ENCODE measurements at regions of chr16 and their contacts with region 1.

Region 1: DNA sequence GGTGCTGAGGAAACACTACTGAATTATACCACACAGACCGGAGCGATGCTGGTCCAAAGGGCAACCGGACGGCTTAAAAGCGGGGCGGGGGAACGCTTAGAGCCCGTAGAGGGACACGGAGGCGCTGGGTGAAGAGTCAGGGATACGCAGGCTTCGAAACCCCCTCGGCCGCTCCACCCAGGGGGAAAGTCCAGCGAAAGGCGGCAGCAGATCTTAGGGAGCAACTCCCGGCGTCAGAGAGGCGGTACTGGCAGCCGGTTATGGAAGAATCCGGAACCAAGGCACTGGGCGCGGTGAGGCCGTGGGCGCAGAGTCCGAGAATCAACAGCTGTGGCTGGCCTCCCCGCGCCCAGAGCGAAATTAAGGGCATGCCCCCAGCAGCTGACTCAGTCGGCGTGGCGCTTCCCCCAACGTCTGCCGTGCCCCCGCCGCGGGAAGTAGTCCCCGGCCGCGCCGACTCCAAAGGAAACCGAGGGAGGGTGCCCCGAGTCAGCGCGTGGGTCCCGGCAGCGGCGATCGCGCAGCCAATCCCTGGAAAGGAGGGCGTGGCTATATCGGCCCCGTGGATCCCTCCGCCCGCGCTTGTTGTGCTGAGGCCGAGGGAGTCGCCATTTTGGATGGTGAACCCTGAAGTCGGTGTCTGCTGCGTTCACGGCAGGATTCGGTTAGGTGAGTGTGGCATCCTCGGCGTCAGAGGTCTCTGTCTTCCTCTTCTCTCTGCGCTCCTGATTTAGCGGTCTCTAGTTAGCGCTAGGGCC is at the start of gene IST1:
- DNase-seq: peak; percentile 98
- H3K4me3 Mint-ChIP-seq: peak within 1 kb of the TSS; percentile 90
- H3K27ac Mint-ChIP-seq: peak within 1 kb of the TSS; percentile 91
- H3K4me1 Mint-ChIP-seq: peaks cover 12% of the 10 kb centered on the region
- H3K27me3 Mint-ChIP-seq: no peaks in the 10 kb centered on the region
- total RNA-seq, gene IST1: 156 and 169 TPM in 2 replicates

Region 2: DNA sequence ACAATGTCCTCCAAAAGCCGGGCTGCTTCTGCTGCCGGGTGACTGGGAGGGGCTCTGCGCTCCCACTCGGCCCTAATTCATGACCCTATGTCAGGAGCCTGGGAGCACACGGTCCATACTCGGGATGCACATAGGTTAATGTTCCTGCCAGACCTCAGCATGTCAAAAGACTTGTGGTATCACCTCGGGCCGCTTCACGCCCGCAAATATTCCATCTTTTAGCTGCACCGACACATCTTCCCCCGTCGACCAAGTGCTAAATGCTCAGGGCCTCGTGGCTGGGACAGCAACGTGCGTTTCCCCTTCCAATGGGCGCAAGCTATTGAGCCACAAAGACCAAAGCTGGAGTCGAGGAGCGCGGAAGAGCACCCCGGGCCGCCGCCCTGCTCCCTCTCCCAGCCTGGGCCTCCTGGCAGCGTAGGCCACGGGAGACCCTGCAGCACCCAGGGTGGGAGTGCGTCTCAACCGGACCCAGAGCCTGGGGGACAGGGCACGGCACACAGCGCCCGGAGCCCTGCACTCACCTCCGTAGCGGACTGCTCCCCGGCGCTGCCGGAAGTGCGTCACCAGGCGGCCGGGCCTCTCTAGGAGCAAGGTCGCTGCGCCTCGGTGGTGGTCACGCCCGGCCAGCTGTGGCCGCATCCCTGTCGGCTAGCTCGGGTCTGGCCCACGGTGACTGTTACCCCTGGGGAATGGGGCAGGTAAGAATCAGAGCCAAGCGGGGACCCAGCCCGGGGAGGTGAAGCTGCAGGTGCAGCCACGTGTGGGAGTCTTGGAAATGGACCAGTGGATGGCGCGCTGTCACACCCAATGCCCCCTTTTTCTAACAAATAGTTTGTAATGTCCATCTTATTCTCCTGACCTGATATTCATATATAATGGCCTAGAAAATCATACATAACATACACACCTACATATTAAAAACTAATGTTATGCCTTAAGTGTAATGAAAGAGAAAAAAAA is 433.1 kb before region 1 on chr16 and contains the start of gene ZNF23:
- intact Hi-C with region 1: no loop called
- DNase-seq: peak; percentile 71
- H3K4me3 Mint-ChIP-seq: peak within 1 kb of the TSS; percentile 86
- H3K27ac Mint-ChIP-seq: peak within 1 kb of the TSS; percentile 86
- H3K4me1 Mint-ChIP-seq: peaks cover 13% of the 10 kb centered on the region
- H3K27me3 Mint-ChIP-seq: peaks cover 1% of the 10 kb centered on the region
- total RNA-seq, gene ZNF23: 4.9 and 6.4 TPM in 2 replicates

Region 3: DNA sequence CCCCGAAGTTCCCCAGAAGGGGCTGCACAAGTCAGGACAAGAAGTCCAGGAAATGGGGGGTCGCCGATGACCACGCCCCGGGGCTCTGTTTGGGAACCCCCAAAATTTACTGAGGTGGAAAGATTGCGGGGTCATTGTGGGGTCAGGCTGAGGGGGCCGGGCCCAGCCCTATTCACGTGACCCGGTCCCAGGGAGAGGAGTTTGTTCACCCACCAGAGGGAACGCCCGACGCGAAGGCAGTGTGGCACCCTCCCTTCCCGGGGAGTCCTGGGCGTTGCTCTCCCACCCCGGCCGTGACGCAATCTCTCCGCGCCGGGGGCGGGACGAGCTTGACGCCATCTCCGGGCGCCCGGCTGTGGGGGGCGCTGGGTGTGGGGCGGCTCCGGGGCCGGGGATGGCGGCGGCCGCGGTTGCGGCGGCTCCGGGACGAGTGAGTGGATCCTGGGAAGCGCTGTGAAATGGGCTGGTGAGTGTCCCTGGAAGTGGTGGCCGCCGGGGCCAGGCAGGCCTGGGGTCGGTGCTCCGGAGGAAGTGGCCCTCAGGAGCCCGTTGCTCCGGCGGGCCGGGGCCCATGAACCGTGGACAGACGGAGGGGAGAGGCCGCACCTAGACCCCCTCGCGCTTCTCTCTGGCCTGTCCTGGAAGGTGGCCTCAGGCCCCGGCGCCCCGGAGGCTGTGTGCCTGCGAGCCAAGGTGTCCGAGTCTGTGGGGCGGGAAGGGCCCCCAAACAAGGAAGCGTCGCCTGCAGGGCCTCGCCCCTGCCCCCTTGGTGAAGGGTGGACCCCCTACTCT is 49.3 kb before region 1 on chr16 and contains the start of gene ATXN1L:
- intact Hi-C with region 1: loop called (anchors 1 kb)
- DNase-seq: peak; percentile 94
- H3K4me3 Mint-ChIP-seq: peak within 1 kb of the TSS; percentile 93
- H3K27ac Mint-ChIP-seq: peak within 1 kb of the TSS; percentile 94
- H3K4me1 Mint-ChIP-seq: peaks cover 52% of the 10 kb centered on the region
- H3K27me3 Mint-ChIP-seq: no peaks in the 10 kb centered on the region
- total RNA-seq, gene ATXN1L: 20.1 and 20.6 TPM in 2 replicates

Region 4: DNA sequence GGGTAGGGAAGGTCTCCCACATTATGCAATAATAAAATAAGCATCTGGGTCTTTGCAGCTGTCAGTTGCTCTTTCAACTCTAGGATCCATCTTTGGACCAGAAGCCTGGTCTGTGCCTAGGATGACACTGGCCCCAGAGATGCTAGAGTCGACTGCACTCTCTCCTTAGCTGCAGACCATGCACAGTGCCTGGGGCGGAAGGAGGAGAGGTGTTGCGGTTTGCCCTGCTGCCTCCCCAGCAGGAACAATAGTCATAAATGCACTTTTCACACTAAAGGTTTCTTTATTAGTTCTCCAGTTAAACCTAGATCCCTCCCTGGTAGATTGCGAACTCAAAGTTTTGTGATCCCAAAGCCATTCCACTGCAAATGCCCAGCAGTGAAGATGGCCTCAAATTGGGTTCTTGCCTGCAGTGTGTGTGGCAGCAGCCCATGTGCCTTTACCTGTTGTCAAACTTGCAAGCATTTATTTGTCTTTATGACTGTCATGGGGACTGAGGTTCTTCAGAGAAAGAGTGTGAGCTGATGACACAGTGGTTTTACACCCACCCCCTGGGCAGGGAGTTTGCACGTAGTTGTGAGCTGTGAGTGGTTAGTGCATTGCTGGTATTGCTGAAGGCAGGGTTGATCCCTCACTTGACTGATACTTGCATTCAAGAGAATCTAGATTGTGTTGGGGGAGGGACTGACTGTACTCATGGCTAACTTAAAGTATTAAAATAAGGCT is 39.0 kb before region 1 on chr16:
- intact Hi-C with region 1: no loop called
- DNase-seq: no peak
- H3K4me3 Mint-ChIP-seq: no peak overlapping the region
- H3K27ac Mint-ChIP-seq: peak overlapping the region; percentile 88
- H3K4me1 Mint-ChIP-seq: peaks cover 53% of the 10 kb centered on the region
- H3K27me3 Mint-ChIP-seq: no peaks in the 10 kb centered on the region

Region 5: GRCh38 chr16:71883849-71884638 is 11.1 kb before region 1 on chr16 and contains the start of gene ZNF821:
- intact Hi-C with region 1: loop called (anchors 1 kb)
- DNase-seq: peak; percentile 61
- H3K4me3 Mint-ChIP-seq: peak within 1 kb of the TSS; percentile 96
- H3K27ac Mint-ChIP-seq: peak within 1 kb of the TSS; percentile 94
- H3K4me1 Mint-ChIP-seq: peaks cover 54% of the 10 kb centered on the region
- H3K27me3 Mint-ChIP-seq: peaks cover 16% of the 10 kb centered on the region
- total RNA-seq, gene ZNF821: 6.4 and 7.4 TPM in 2 replicates

Region 6: DNA sequence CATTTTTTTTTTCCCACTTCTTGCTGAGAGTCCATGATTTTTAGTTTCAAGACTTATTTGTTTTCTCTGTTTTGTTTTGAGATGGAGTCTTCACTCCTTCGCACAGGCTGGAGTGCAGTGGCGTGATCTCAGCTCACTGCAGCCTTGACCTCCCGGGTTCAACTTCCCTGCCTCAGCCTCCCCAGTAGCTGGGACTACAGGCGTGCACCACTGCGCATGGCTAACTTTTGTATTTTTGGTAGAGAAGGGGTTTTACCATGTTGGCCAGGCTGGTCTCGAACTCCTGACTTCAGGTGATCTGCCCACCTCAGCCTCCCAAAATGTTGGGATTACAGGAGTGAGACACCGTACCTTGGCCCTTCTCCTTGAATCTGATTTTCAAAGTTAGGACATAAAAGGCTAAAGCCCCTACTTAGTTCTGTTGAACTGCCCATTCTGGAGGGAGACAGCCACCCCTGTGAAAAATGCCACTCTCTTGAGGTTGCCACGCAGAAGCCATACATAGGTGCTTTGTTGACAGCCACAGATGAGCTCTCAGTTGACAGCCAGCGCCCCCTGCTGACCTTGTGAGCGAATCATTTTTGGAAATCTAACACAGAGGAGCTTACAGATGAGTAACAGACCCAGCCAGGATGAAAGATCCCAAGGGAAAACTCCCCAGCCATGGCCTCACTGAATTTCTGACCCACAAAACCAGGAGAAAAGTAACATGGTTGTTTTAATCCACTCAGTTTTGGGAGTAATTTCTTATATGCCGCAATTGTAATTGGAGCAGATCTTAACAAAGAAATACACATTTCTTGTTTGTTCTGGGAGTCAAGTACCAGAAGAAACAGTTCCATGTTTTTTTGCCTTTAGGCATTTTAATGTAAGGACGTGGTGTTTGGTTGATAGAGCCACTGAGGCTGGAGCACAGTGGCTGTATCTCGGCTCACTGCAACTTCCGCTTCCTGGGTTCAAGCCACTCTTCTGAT is 66.3 kb after region 1 on chr16:
- intact Hi-C with region 1: loop called (anchors 1 kb)
- DNase-seq: peak; percentile 70
- H3K4me3 Mint-ChIP-seq: no peak overlapping the region
- H3K27ac Mint-ChIP-seq: no peak overlapping the region
- H3K4me1 Mint-ChIP-seq: peaks cover 9% of the 10 kb centered on the region
- H3K27me3 Mint-ChIP-seq: peaks cover 4% of the 10 kb centered on the region

Region 7: GRCh38 chr16:72008424-72009216 is 113.5 kb after region 1 on chr16 and contains the start of gene DHODH:
- intact Hi-C with region 1: loop called (anchors 1 kb)
- DNase-seq: peak; percentile 98
- H3K4me3 Mint-ChIP-seq: peak within 1 kb of the TSS; percentile 99
- H3K27ac Mint-ChIP-seq: peak within 1 kb of the TSS; percentile 99
- H3K4me1 Mint-ChIP-seq: peaks cover 16% of the 10 kb centered on the region
- H3K27me3 Mint-ChIP-seq: no peaks in the 10 kb centered on the region
- total RNA-seq, gene DHODH: 31.0 and 33.1 TPM in 2 replicates

Region 8: DNA sequence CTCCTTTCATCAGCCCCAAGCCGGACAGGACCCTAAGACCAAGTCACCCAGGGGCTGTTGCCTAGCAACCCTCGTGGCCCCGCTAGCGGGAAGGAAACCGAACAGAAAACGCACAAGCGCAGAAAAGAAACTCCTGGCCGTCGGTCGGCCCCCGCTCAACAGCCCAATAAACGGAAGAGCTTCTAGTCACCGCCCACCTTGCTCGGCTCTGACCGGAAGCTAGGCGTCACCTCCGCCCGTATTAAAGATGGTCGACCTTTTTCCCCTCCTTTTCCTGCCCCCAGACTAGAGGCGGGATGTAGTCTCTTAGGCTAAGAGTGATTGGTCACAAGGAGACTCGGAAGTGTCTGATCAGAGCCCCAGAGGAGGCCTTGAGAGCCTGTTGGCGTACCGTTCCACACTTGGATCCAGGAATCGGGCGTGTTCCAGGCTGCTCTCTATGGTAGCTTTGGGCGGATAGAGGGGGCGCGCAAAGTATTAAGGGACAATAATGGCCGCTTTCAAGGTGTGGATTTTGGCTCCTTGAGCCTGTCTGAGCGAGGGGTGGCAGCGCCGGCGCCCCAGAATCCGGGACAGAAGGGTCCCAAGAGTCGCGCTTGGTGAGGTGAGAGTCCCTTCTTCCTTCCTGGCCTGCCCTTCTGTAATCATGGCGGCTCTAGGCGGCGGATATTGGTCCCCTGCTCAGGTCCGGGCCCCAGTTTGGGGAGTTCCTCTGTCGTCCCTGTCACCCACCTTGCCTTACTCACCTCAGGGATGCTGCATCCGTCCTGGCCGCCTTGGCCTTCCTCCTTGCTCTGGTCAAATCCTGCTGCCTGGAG is 198.6 kb after region 1 on chr16 and contains the starts of genes DHX38 and TXNL4B:
- intact Hi-C with region 1: loop called (anchors 1 kb)
- DNase-seq: peak; percentile 92
- H3K4me3 Mint-ChIP-seq: peak within 1 kb of the TSS; percentile 99
- H3K27ac Mint-ChIP-seq: peak within 1 kb of the TSS; percentile 99
- H3K4me1 Mint-ChIP-seq: peaks cover 64% of the 10 kb centered on the region
- H3K27me3 Mint-ChIP-seq: no peaks in the 10 kb centered on the region
- total RNA-seq, gene DHX38: 89.8 and 99.4 TPM in 2 replicates
- total RNA-seq, gene TXNL4B: 24.0 and 25.1 TPM in 2 replicates